Endothelial cell of umbilical vein (primary cell): ENCODE measurements at regions of chr6 and their contacts with region 1.

Region 1: DNA sequence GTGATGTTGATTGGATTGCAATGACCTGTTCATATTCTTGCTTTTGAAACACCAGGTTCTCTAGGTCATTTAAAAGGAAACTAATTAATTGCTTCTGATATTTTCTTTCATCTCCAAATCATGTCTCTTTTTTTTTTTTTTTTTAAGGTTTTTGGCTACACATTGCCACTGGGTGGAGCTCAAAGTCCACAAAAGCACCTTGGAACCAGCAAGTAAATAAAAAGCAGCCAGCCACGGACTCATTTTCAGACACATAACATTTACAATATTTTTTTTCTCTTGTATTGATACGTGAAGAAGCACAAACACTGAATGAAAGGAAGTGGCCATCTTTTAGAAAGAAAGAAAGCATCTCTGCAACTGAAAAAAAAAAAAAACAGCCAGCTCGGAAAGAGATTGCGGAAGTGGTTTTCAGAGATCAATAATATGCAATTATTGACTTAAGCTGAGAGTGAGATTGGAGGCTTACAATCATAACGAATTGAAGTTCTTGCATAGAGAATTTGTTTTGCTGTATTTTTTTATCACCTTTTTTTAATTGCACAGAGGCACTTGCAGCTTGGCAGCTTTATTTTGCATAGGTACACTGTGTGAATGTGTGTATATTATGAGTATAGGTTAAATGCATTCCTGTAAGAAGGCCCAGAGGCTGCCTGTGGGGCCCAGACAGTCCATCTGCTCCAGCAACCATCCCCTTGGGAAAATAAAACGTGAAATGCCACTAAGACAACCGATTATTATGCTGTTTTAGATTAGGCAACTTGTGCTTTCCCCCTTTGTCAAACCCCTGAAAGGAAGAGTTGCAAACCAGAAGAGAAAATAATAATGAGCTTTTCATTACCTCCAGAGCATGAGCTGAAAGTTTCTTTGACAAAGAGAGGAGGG is 28.2 kb downstream of the CGA start:
- DNase-seq: peak; percentile 70
- H3K4me3 ChIP-seq: no peak overlapping the region
- H3K27ac ChIP-seq: no peak overlapping the region
- H3K4me1 ChIP-seq: no peaks in the 10 kb centered on the region
- H3K27me3 ChIP-seq: peaks cover 13 to 16% of the 10 kb centered on the region in 2 experiments
- CTCF ChIP-seq: peak; percentile 30 to 35
- POLR2A ChIP-seq: no peak

Region 2: GRCh38 chr6:87078983-87079616 is 12.4 kb after region 1 on chr6:
- CTCF ChIA-PET with region 1: interaction called, 100 read pairs
- POLR2A ChIA-PET with region 1: no interaction called
- dilution Hi-C with region 1: no loop called
- intact Hi-C with region 1: no loop called
- DNase-seq: peak; percentile 61
- H3K4me3 ChIP-seq: no peak overlapping the region
- H3K27ac ChIP-seq: no peak overlapping the region
- H3K4me1 ChIP-seq: no peaks in the 10 kb centered on the region
- H3K27me3 ChIP-seq: peaks cover 0 to 3% of the 10 kb centered on the region in 2 experiments
- CTCF ChIP-seq: peak; percentile 92 to 97
- POLR2A ChIP-seq: no peak

Region 3: DNA sequence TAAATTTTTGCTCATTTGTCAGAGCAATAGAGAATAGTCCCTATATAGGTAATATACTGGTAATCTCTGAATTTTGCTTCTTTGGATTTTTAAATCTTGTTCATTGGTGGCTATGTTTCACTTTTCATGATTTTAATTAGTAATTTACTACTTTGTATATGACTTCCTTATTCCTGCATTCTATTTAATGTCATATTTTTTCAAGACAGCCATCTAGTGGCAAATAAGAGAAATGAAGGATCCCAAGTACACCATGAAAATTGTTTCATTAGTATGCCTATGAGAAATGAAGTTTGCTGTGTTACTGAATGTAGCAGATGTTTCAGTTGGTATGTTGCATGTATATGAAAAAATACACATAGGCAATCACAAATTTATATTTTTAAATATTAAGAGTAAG is 171.1 kb after region 1 on chr6:
- CTCF ChIA-PET with region 1: interaction called, 5 read pairs
- POLR2A ChIA-PET with region 1: no interaction called
- dilution Hi-C with region 1: no loop called
- intact Hi-C with region 1: loop called (anchors 5 kb)
- DNase-seq: peak; percentile 30
- H3K4me3 ChIP-seq: no peak overlapping the region
- H3K27ac ChIP-seq: no peak overlapping the region
- H3K4me1 ChIP-seq: no peaks in the 10 kb centered on the region
- H3K27me3 ChIP-seq: no peaks in the 10 kb centered on the region
- CTCF ChIP-seq: peak; percentile 27 to 33
- POLR2A ChIP-seq: no peak

Region 4: GRCh38 chr6:87382861-87383260 is 316.2 kb after region 1 on chr6:
- CTCF ChIA-PET with region 1: no interaction called
- POLR2A ChIA-PET with region 1: no interaction called
- dilution Hi-C with region 1: no loop called
- intact Hi-C with region 1: no loop called
- DNase-seq: no peak
- H3K4me3 ChIP-seq: no peak overlapping the region
- H3K27ac ChIP-seq: no peak overlapping the region
- H3K4me1 ChIP-seq: no peaks in the 10 kb centered on the region
- H3K27me3 ChIP-seq: no peaks in the 10 kb centered on the region
- CTCF ChIP-seq: no peak
- POLR2A ChIP-seq: no peak

Region 5: GRCh38 chr6:87472525-87473418 is 406.1 kb after region 1 on chr6 and contains the start of gene SLC35A1:
- CTCF ChIA-PET with region 1: no interaction called
- POLR2A ChIA-PET with region 1: no interaction called
- dilution Hi-C with region 1: no loop called
- intact Hi-C with region 1: loop called (anchors 10 kb)
- DNase-seq: peak; percentile 88
- H3K4me3 ChIP-seq: peak within 1 kb of the TSS; percentile 53 to 91 (median 90)
- H3K27ac ChIP-seq: peak within 1 kb of the TSS; percentile 91
- H3K4me1 ChIP-seq: peaks cover 8% of the 10 kb centered on the region
- H3K27me3 ChIP-seq: peaks cover 2% of the 10 kb centered on the region in 2 experiments
- CTCF ChIP-seq: no peak
- POLR2A ChIP-seq: peak; percentile 86
- total RNA-seq, gene SLC35A1: 12.9 and 13.0 TPM in 2 replicates

Region 6: DNA sequence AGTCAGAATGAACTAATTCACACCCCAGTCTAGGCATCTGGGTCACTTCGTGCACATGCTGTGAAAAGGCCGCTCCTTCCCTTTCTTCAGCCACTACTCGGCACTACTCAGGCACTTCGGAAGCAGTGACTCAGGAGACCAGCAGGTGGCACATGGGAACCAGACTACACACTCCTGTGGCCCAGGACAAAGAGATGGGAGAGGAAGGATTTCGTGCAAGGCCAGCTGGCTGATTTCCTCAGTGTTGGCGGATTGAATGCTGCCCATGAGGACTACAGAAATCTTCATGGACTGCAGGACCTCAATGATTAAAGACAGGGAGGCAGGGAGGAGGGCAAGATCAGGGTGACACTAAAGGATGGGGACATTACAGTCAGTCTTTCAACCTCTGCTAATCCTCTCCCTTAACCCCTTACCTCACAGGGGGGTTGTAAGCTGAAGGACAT is 863.2 kb after region 1 on chr6:
- CTCF ChIA-PET with region 1: interaction called, 7 read pairs
- POLR2A ChIA-PET with region 1: no interaction called
- dilution Hi-C with region 1: no loop called
- intact Hi-C with region 1: loop called (anchors 5 kb)
- DNase-seq: peak; percentile 77
- H3K4me3 ChIP-seq: no peak overlapping the region
- H3K27ac ChIP-seq: no peak overlapping the region
- H3K4me1 ChIP-seq: no peaks in the 10 kb centered on the region
- H3K27me3 ChIP-seq: peaks cover 7 to 9% of the 10 kb centered on the region in 2 experiments
- CTCF ChIP-seq: peak; percentile 88
- POLR2A ChIP-seq: no peak

Region 7: GRCh38 chr6:88301888-88302768 is 1235.4 kb after region 1 on chr6:
- CTCF ChIA-PET with region 1: no interaction called
- POLR2A ChIA-PET with region 1: no interaction called
- dilution Hi-C with region 1: no loop called
- intact Hi-C with region 1: no loop called
- DNase-seq: no peak
- H3K4me3 ChIP-seq: no peak overlapping the region
- H3K27ac ChIP-seq: no peak overlapping the region
- H3K4me1 ChIP-seq: no peaks in the 10 kb centered on the region
- H3K27me3 ChIP-seq: no peaks in the 10 kb centered on the region
- CTCF ChIP-seq: no peak
- POLR2A ChIP-seq: no peak

Region 8: DNA sequence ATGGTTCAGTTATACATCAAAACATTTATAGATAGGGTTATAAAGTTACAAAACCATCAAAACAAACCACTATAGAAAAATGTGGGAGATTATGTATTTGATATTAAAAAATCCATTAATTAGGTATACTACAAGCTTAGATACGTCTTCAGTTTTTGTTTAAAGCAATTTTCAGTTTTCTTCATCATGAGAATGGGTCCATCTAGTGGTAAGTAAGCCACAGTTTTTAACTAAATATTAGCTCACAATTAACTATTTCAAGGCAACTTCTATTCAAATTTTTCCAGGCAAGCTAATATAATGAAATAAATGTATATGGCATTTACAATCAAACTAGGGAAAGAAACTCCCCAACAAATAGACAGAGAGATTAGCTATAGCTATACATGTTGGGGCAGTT is 1852.3 kb after region 1 on chr6:
- CTCF ChIA-PET with region 1: interaction called, 15 read pairs
- POLR2A ChIA-PET with region 1: no interaction called
- dilution Hi-C with region 1: no loop called
- intact Hi-C with region 1: no loop called
- DNase-seq: no peak
- H3K4me3 ChIP-seq: no peak overlapping the region
- H3K27ac ChIP-seq: no peak overlapping the region
- H3K4me1 ChIP-seq: no peaks in the 10 kb centered on the region
- H3K27me3 ChIP-seq: no peaks in the 10 kb centered on the region
- CTCF ChIP-seq: no peak
- POLR2A ChIP-seq: no peak